ENCODE measurements at regions of chr17 and their contacts with region 1.

Region 1: DNA sequence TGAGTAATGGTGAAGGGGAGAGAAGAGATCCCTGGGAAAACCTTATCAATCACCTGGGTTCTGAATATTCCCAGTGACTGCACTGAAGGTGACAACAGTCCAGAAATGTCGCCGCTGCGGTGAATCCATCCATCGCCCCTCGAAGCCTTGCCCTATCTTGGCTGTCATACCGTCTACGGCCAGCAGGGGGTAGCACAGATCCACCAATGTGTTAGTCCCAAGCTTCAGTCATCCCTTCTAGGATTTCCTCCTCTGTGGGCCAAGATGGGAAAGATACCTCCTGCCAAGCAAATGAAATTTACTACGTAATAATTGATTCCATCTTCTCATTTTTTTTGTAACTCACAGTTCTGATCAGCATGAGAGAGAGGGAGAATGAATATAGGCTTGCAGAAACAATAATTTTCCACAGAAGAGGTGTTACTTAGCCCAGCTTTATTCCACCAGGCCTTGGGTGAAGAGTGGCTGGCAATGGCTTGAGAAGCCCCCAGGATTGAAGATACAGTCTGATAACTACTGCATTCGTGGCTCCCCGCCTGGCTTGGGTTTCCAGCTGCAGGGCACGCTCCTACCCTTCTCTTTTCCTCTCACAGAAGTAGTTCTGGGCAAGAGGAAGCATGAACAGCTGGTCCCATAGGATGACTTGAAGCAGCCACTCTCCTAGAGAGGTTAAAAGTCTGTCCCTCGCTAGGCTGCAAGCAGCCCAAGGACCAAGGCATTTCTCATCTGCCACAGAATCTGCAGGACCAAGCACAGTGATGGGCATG is 2.6 kb upstream of the FMNL1 start:
- DNase-seq: peak; percentile 92
- ATAC-seq: peak; percentile 76
- H3K4me3 ChIP-seq: no peak overlapping the region
- H3K27ac ChIP-seq: no peak overlapping the region
- H3K4me1 ChIP-seq: peaks cover 12% of the 10 kb centered on the region
- H3K27me3 ChIP-seq: no peaks in the 10 kb centered on the region
- CTCF ChIP-seq: peak; percentile 98

Region 2: DNA sequence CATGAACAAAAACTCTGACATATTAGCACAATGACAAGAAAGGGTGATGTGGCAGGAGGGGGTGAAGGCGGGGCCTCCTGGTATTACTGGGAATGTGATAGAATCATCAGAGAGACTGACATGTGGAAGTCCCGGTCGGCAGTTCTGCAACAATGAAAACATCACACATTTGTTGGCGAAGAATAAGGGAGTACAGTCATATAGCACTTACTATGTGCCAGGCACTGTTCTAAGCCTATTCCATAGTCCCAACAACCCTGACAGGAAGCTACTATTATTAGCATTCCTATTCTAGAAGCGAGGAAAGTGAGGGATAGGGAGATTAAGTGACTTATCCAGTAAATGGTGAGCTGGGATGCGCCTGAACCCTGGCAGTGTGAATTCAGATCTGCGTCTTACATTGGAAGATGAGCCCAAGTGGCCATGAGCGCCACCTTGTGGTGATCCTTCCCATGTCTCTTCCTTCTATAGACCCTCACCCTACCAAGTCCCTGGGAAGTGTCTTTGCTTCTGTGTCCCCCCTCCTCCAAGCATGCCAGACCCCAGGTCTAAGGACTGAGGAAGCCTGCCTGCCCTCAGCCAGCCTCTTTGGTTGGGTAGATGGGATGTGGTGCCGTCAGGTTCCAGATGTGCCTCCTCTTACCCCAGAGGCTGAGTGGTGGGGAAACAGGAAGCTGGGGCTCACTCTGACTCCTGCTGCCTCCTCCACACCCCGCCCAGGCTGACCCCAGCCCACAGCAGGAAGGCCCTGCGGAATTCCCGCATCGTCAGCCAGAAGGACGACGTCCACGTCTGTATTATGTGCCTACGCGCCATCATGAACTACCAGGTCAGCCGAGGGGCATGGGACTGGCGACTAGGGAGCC is 16.6 kb after region 1 on chr17:
- CTCF ChIA-PET with region 1: interaction called, 20 read pairs
- POLR2A ChIA-PET with region 1: interaction called, 3 read pairs
- intact Hi-C with region 1: loop called (anchors 1 kb)
- DNase-seq: peak; percentile 85
- ATAC-seq: peak; percentile 66
- H3K4me3 ChIP-seq: no peak overlapping the region
- H3K27ac ChIP-seq: no peak overlapping the region
- H3K4me1 ChIP-seq: peaks cover 8% of the 10 kb centered on the region
- H3K27me3 ChIP-seq: no peaks in the 10 kb centered on the region
- CTCF ChIP-seq: peak; percentile 97

Region 3: GRCh38 chr17:45834471-45835396 is 615.7 kb after region 1 on chr17:
- CTCF ChIA-PET with region 1: no interaction called
- POLR2A ChIA-PET with region 1: no interaction called
- intact Hi-C with region 1: loop called (anchors 5 kb)
- DNase-seq: peak; percentile 56
- ATAC-seq: peak; percentile 27
- H3K4me3 ChIP-seq: no peak overlapping the region
- H3K27ac ChIP-seq: no peak overlapping the region
- H3K4me1 ChIP-seq: 0 out of 2 replicates have a peak, but pooled peaks cover 4% of the 10 kb centered on the region
- H3K27me3 ChIP-seq: peaks cover 11% of the 10 kb centered on the region; the same call in 1 of the 2 replicates
- CTCF ChIP-seq: no peak